Activated CD4-positive, alpha-beta T cell treated with anti-CD3 and anti-CD28 coated beads for 36 hours (primary cell): ENCODE measurements at regions of chr9 and their contacts with region 1.

Region 1: GRCh38 chr9:26856413-26857032 is 36.1 kb downstream of the CAAP1 start:
- DNase-seq: peak; percentile 41
- ATAC-seq: peak; percentile 72
- H3K4me3 Mint-ChIP-seq: no peak overlapping the region
- H3K27ac Mint-ChIP-seq: no peak overlapping the region
- H3K4me1 Mint-ChIP-seq: peaks cover 2% of the 10 kb centered on the region
- H3K27me3 Mint-ChIP-seq: no peaks in the 10 kb centered on the region

Region 2: DNA sequence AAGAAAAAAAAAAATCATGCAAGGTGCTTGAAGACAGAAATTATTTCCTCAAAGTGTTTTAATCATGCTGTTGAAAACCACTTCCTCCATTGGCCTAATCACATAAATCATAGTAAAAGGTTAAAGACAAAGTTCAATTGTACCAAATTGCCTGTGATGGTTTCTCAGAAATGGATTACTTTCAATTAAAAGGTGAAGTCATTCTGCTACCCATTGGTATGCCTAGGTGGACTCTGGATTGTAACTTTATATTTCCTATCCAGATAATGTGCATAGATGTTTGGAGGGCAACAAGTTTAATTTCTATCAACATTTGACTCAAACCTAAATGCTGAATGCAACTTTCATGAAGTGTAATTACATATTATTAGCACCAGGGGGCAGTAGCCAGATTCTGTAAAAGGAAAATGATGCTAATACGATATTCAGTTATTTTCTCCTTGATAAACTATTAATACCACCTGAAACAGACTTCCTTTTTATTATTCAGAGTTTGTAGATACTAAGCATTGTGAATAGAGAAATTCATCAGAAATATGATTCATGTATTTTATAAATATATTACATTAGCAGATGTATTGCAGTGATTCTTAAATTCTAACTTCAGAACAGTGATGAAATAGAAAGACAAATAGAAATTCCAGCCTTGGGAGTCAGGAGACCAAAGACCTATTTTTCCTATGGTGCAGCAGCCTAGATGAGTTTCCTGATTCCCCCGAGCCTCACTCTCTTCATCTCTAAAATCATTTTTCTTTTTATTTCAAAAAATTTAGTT is 112.1 kb before region 1 on chr9:
- CTCF ChIA-PET with region 1: interaction called, 7 read pairs
- POLR2A ChIA-PET with region 1: no interaction called
- intact Hi-C with region 1: loop called (anchors 1 to 5 kb)
- DNase-seq: no peak
- ATAC-seq: no peak
- H3K4me3 Mint-ChIP-seq: no peak overlapping the region
- H3K27ac Mint-ChIP-seq: no peak overlapping the region
- H3K4me1 Mint-ChIP-seq: no peaks in the 10 kb centered on the region
- H3K27me3 Mint-ChIP-seq: peaks cover 6% of the 10 kb centered on the region

Region 3: GRCh38 chr9:27053369-27054022 is 197.0 kb after region 1 on chr9:
- CTCF ChIA-PET with region 1: no interaction called
- POLR2A ChIA-PET with region 1: no interaction called
- intact Hi-C with region 1: no loop called
- DNase-seq: no peak
- ATAC-seq: no peak
- H3K4me3 Mint-ChIP-seq: no peak overlapping the region
- H3K27ac Mint-ChIP-seq: no peak overlapping the region
- H3K4me1 Mint-ChIP-seq: no peaks in the 10 kb centered on the region
- H3K27me3 Mint-ChIP-seq: no peaks in the 10 kb centered on the region